Lower leg skin (tissue), 4 donors: ENCODE measurements at regions of chr1 and their contacts with region 1.

Region 1: DNA sequence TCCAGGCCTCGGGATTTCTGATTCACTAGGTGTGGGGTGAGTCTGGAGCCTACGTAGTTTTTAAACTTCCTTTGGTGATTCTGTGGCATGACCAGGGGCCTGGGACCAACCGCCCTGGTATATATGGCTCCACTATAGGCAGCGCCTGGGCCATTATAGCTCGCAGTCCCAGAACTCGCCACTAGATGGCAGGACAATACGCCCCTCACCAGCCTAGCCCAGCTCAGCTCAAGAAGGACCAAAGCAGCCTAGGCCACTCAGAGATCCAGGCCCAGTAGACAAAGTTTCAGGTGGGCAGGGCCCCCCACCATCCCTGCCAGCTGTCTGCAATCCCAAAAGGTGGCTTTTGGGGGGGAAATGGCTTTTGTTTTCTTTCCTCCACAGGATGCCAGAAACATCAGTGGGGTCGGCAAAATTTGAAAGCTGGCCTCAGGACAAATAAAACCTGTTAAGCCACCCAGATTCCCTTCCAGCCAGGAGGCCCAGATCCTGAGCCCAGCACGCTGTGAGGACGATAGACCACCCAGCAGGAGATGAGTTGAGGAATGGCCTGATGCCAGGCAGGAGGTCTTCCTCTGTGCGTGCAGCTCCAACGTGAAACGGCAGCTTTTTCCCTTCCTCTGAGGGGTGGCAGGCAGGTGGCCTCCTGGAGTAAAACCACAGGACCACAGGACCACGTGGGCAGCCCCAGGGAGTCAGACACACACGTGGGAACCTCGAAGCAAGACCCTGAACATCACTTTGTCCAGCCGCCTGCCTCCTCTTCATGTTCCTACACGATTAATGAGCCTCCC is 24.8 kb upstream of the TMEM51 start:
- DNase-seq: peak; percentile 53 to 92
- H3K4me3 ChIP-seq: no peak overlapping the region
- CTCF ChIP-seq: peak in 1 of 3 donors; percentile 47
- POLR2A ChIP-seq: no peak

Region 2: DNA sequence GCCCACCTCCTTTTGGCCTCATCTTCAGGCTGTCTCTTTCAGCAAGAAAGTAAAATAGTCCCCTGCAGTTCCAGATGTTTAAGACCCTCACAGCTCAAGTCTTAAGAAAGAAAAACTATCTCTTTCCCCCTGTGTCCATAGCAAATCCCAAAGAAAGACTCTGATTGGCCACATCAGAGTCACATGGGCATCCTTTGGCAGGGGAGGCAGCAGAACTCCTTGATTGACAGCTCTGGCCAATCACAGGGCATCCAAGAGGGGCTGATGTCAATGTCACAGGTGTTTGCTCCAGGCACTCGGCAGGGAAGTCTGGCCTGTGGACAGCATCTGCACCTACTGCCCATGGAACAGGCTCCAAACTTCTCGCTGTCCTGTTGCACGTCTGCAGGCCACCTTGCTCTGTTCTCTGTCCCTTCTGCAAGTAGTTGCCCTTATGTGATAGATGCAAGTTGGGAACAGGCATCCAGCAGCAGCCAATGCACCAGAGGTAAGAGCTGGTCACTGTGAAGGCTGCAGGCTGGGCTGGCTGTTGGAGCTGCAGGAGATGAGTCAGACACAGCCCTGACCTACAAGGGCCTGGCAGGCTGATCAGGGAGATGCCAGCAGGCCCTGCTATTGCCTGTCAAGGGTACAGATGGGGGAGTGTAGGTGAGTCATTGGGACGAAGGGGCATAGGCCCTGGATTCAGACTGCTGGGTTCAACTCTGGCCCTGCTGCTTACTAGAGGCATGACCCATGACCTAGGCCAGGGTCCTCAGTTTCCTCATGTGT is 72.0 kb before region 1 on chr1:
- intact Hi-C with region 1: no loop called
- DNase-seq: no peak
- H3K4me3 ChIP-seq: no peak overlapping the region
- CTCF ChIP-seq: no peak
- POLR2A ChIP-seq: no peak

Region 3: DNA sequence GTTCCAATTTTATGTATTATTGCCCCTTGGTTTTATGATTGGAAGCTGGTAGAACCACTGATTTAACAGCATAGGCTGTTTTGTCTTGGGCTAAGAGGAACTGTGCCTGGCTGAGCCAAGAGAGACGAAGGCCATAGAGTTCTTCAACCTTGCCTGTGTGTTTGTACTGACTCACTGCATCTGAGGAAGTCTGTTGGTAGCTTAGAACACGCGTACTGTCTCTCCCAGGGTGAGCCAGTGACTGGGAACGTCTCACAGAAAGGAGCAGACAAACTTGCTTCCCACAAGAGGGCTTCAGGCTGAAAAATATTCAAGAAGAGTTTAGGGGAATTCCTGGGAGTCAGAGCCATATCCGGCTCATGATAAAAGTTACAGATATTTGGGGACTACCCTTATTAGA is 39.8 kb after region 1 on chr1:
- intact Hi-C with region 1: no loop called
- DNase-seq: no peak
- H3K4me3 ChIP-seq: no peak overlapping the region
- CTCF ChIP-seq: no peak
- POLR2A ChIP-seq: no peak

Region 4: GRCh38 chr1:15304701-15305467 is 176.2 kb after region 1 on chr1:
- intact Hi-C with region 1: loop called (anchors 5 kb)
- DNase-seq: peak in 1 of 2 donors; percentile 91
- H3K4me3 ChIP-seq: no peak overlapping the region
- CTCF ChIP-seq: peak in 1 of 3 donors; percentile 35
- POLR2A ChIP-seq: no peak